PC-9 (cell line): ENCODE measurements at regions of chr17 and their contacts with region 1.

Region 1: DNA sequence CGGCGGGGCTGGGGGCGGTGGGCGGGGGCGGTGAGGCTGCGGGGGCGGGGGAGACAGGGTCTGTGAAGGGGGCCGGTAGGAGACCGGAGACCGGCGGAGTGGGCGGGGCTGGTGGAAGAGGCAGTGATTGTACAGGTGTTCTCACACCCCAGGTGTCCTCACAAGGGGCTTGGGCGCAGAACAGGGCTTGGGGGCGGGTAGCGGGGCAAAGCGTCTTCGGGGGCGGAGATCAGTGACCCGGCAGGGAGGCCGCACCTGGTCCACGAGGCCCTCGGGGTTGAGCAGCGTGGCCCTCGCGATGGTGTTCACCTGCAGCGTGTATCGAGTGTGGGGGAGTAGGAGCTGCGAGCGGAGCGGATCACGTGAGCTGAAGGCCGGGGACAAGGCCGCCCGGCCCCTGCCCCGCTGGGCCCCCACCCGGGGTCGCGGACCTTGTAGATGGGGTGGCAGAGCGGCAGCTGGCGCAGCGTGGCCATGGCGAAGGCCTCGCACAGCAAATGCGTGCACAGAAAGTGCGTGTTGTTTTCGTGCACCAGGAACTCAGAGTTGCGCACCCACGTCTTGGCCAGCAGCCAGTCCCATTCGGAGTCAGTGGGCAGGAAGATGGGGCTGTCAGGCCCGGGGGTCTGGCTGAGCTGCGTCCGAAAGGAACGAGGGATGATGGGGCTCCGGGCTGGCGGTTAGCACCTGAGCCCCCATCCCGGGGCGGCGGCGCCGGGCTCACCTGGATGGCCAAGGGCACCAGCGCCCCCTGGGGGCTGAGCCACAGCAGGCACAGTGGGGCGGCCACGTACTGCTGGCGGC is 8.5 kb downstream of the ALOXE3 start:
- DNase-seq: peak in 1 of 2 experiments; percentile 67
- H3K4me3 ChIP-seq: peak overlapping the region; percentile 18; the same call in 1 of the 2 replicates
- H3K27ac ChIP-seq: no peak overlapping the region
- H3K4me1 ChIP-seq: no peaks in the 10 kb centered on the region
- H3K27me3 ChIP-seq: no peaks in the 10 kb centered on the region
- CTCF ChIP-seq: peak; percentile 74

Region 2: GRCh38 chr17:8079291-8080207 is 30.3 kb before region 1 on chr17:
- CTCF ChIA-PET with region 1: interaction called, 3 read pairs
- POLR2A ChIA-PET with region 1: no interaction called
- intact Hi-C with region 1: loop called (anchors 2 kb)
- DNase-seq: peak in 1 of 2 experiments; percentile 78
- H3K4me3 ChIP-seq: peak overlapping the region; percentile 54
- H3K27ac ChIP-seq: no peak overlapping the region
- H3K4me1 ChIP-seq: no peaks in the 10 kb centered on the region
- H3K27me3 ChIP-seq: peaks cover 6% of the 10 kb centered on the region
- CTCF ChIP-seq: peak; percentile 81

Region 3: DNA sequence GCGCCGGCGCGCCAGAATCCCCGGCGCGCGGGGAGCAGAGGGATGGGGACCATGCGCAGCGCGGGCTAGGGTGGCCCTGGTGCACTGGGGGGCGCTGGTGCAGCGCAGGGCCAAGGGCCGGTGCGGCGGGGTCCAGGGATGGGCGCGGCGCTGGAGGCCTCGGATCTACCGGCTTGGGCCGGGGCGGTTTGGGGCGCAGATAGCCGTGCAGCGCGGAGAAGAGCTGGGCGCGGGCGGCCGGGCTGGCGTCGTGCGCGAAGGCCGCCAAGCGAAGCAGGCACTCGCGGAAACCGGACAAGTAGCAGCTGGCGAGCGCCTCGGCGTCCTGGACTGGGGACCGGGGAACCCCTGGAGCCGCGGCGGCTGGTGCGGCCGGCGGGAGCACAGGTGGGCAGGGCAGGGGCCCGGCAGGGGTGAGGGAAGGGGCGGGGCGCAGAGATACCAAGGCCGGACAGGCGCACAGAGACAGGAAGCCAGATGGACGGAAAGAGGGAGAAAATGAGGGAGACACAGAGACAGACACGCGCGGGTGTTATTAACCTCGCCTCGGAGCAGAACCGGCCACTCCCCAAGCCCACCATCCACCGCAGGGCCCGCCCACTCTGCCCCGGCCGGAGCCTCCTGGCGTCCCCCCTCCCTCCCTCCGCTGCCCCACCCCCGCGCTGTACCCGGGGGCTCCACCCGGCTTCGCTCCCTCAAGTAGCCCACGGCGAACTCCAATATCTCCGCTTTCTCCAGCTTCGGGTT is 12.0 kb after region 1 on chr17:
- CTCF ChIA-PET with region 1: no interaction called
- POLR2A ChIA-PET with region 1: no interaction called
- intact Hi-C with region 1: no loop called
- DNase-seq: peak in 1 of 2 experiments; percentile 89
- H3K4me3 ChIP-seq: peak overlapping the region; percentile 81
- H3K27ac ChIP-seq: no peak overlapping the region
- H3K4me1 ChIP-seq: peaks cover 23% of the 10 kb centered on the region
- H3K27me3 ChIP-seq: no peaks in the 10 kb centered on the region
- CTCF ChIP-seq: peak; percentile 60

Region 4: DNA sequence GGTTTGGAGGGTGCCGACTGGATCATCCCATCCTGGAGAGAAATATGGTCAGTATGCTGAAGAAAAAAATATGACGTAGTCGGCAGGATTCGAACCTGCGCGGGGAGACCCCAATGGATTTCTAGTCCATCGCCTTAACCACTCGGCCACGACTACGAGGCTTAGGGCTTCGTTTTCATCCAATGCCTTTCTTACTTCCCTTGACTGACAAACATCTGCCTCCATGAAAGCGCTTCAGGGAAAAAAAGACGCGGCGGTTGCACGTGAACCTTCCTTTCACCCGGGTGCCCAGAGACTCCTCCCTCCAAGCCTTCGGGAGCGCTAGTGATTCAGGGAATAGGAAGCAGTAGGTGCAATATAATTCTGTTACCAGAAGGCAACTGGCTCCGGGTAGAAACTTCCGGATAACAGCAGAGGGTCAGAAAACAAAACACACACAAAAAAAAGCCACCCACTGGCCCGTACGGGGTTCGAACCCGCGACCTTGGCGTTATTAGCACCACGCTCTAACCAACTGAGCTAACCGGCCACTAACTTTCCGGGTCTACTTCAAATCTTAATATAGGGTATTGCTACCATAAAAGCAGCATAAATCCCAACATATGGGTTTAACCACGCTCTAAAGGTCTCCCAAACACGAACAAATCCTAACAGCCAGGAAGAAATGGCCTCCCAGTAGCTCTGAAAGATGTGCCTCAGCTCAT is 116.8 kb after region 1 on chr17:
- CTCF ChIA-PET with region 1: no interaction called
- POLR2A ChIA-PET with region 1: no interaction called
- intact Hi-C with region 1: no loop called
- DNase-seq: no peak
- H3K4me3 ChIP-seq: no peak overlapping the region
- H3K27ac ChIP-seq: 0 out of 2 replicates have a peak overlapping the region, but pooled peaks have one; percentile 26
- H3K4me1 ChIP-seq: no peaks in the 10 kb centered on the region; the same call in 1 of the 2 replicates
- H3K27me3 ChIP-seq: no peaks in the 10 kb centered on the region
- CTCF ChIP-seq: no peak

Region 5: GRCh38 chr17:9512323-9513168 is 1402.7 kb after region 1 on chr17:
- CTCF ChIA-PET with region 1: interaction called, 10 read pairs
- POLR2A ChIA-PET with region 1: no interaction called
- intact Hi-C with region 1: no loop called
- DNase-seq: no peak
- H3K4me3 ChIP-seq: no peak overlapping the region
- H3K27ac ChIP-seq: no peak overlapping the region
- H3K4me1 ChIP-seq: no peaks in the 10 kb centered on the region
- H3K27me3 ChIP-seq: no peaks in the 10 kb centered on the region
- CTCF ChIP-seq: no peak